Right ventricle myocardium superior (tissue), 1 donor: ENCODE measurements at regions of chr1 and their contacts with region 1.

Region 1: GRCh38 chr1:54121482-54122134 is 31.2 kb downstream of the CDCP2 start:
- DNase-seq: peak; percentile 85
- ATAC-seq: peak; percentile 95

Region 2: GRCh38 chr1:54273092-54273794 is 151.6 kb after region 1 on chr1:
- intact Hi-C with region 1: loop called (anchors 10 kb)
- DNase-seq: peak; percentile 72
- ATAC-seq: peak; percentile 57

Region 3: DNA sequence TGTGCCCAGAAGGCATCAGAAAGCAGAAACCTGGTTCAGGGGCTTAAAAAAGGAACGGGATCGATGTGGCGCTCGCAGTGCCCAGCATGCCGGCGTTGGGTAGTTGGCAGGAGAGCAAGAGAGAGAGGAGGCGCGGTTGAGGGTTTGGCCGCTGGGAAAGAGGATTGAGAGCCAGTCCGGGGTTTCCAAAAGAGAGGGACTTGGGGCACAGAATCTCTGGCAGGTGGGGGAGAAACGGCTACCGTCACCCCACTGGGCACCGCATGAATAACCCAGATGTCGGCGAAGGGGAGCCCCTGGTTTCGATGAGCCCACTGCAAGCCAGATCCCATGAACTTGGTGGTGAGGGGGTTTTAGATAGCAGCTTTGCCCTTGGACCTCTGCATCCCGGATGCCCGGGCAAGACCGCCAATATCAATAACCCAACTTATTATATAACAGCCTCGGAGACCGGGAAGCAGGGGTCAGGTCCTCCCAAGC is 366.0 kb after region 1 on chr1:
- intact Hi-C with region 1: loop called (anchors 2 kb)
- DNase-seq: peak; percentile 57
- ATAC-seq: peak; percentile 15